Gastrocnemius medialis (tissue), 4 donors: ENCODE measurements at regions of chr2 and their contacts with region 1.

Region 1: GRCh38 chr2:187581125-187581896 is 27.1 kb upstream of the TFPI start:
- DNase-seq: no peak
- ATAC-seq: peak in 1 of 2 donors; percentile 50
- H3K4me3 ChIP-seq: peak overlapping the region; percentile 24 to 44 (median 32)
- H3K27ac ChIP-seq: no peak overlapping the region
- H3K4me1 ChIP-seq: peaks cover 3 to 4% of the 10 kb centered on the region in 2 donors
- H3K27me3 ChIP-seq: no peaks in the 10 kb centered on the region
- CTCF ChIP-seq: peak; percentile 56 to 66 (median 60)
- POLR2A ChIP-seq: no peak

Region 2: GRCh38 chr2:187390891-187391290 is 190.4 kb before region 1 on chr2:
- in situ Hi-C with region 1: no loop called
- intact Hi-C with region 1: no loop called
- DNase-seq: no peak
- ATAC-seq: no peak
- H3K4me3 ChIP-seq: no peak overlapping the region
- H3K27ac ChIP-seq: no peak overlapping the region
- H3K4me1 ChIP-seq: no peaks in the 10 kb centered on the region
- H3K27me3 ChIP-seq: no peaks in the 10 kb centered on the region
- CTCF ChIP-seq: no peak
- POLR2A ChIP-seq: no peak

Region 3: GRCh38 chr2:187499941-187500532 is 81.3 kb before region 1 on chr2:
- in situ Hi-C with region 1: loop called (anchors 5 kb)
- intact Hi-C with region 1: loop called (anchors 1 kb)
- DNase-seq: peak in 1 of 2 donors; percentile 52
- ATAC-seq: peak; percentile 58 to 81
- H3K4me3 ChIP-seq: no peak overlapping the region
- H3K27ac ChIP-seq: no peak overlapping the region
- H3K4me1 ChIP-seq: peaks cover 0 to 6% of the 10 kb centered on the region in 2 donors
- H3K27me3 ChIP-seq: no peaks in the 10 kb centered on the region
- CTCF ChIP-seq: peak; percentile 71 to 91 (median 81)
- POLR2A ChIP-seq: no peak

Region 4: DNA sequence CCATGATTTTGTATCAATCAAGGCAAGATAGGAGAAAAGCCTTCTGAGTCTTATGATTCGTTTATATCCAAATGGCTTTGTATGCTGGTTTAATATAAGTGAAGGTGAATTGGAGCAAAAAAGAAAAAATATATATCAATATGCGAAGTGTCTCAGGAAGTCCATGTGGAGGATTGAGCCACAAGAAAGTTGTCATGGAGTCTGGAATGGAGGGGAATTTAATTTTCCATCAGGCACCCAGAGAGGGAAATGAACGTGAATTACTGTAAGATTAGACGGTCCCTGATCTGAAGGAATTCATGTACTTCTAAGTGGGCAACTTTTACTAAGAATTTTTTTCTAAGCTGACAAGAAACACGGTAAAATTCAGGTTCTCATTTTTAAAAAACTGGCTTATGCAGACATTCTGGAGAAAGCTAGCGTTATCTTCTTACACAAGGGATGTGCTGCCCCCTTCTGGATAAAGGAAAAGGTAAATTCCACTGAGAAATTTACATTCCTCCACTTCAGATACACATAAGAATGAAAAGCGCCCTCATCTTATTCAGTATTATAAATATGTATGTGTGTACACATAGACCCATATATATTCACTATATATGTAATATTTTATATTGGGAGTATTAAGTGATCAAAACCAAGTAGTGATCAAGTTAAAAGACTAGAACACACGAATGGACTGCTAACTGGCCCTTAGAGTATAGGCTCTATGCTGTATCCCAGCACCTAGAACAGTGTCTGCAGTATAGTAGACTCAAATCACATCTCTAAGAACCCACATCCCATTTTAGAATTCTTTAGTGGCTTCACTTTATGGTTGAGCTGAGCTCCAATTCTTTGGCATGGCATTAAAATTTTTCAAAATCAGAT is 261.9 kb after region 1 on chr2:
- in situ Hi-C with region 1: loop called in 1 of 4 experiments (anchors 25 kb)
- intact Hi-C with region 1: loop called (anchors 1 kb)
- DNase-seq: no peak
- ATAC-seq: no peak
- H3K4me3 ChIP-seq: no peak overlapping the region
- H3K27ac ChIP-seq: no peak overlapping the region
- H3K4me1 ChIP-seq: no peaks in the 10 kb centered on the region
- H3K27me3 ChIP-seq: no peaks in the 10 kb centered on the region
- CTCF ChIP-seq: peak in 4 of 5 experiments; percentile 11 to 62 (median 32)
- POLR2A ChIP-seq: no peak

Region 5: DNA sequence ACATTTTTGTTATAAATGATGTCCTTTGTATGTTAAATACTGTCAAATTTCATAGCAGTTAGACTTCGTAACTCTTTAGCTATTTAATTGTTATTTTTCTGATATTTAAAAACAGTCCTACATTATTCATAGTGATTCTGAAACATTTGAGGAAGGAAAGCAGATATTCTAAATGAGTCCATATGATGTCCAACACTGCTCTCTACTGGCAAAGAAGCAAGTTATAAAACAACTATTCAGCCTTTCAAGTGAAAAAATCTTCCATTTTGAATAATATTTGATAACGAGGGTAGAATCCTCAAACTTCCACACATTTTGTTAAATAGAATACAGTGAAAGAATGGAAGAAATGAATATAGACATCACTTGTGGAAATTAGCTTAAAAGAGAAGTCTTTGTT is 931.1 kb after region 1 on chr2:
- in situ Hi-C with region 1: loop called (anchors 25 kb)
- intact Hi-C with region 1: loop called (anchors 5 kb)
- DNase-seq: no peak
- ATAC-seq: no peak
- H3K4me3 ChIP-seq: no peak overlapping the region
- H3K27ac ChIP-seq: no peak overlapping the region
- H3K4me1 ChIP-seq: no peaks in the 10 kb centered on the region
- H3K27me3 ChIP-seq: no peaks in the 10 kb centered on the region
- CTCF ChIP-seq: peak in 3 of 5 experiments; percentile 27 to 40 (median 29)
- POLR2A ChIP-seq: no peak

Region 6: DNA sequence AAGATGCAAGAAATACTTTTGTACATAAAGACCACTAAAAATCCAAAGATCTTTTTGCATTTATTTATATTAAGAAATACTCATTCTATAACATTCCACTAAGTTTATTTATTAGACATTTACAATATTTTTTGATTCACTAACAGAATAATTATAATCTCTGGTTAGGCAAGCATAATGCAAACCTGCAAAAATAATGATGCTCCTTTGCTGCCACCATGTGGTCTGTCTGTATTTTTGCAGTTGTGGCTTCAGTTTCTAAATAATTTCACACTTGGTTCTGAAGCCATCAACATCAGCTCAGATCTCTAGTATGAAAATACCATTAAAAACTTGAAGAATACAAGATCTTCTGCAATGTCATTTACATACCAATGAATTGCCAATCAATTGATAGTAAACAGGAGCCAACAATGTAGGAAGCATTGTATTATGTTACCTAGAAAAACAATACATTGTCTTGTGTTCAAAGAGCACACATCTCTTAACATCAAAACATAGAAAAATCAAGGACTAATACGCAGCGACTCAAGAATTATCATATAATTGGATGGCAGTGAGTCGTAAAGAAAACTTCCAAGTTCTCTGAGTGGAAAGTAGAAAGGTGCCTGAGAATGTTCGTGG is 1831.1 kb after region 1 on chr2:
- in situ Hi-C with region 1: loop called in 1 of 4 experiments (anchors 25 kb)
- intact Hi-C with region 1: loop called (anchors 5 kb)
- DNase-seq: no peak
- ATAC-seq: peak; percentile 60 to 82
- H3K4me3 ChIP-seq: no peak overlapping the region
- H3K27ac ChIP-seq: peak overlapping the region in 3 of 4 donors; percentile 42 to 51 (median 45)
- H3K4me1 ChIP-seq: peaks cover 7 to 12% of the 10 kb centered on the region in 2 donors
- H3K27me3 ChIP-seq: no peaks in the 10 kb centered on the region
- CTCF ChIP-seq: peak; percentile 46 to 87 (median 70)
- POLR2A ChIP-seq: no peak